SK-N-SH (cell line): ENCODE measurements at regions of chr2 and their contacts with region 1.

Region 1: GRCh38 chr2:31333527-31334183 is 80.9 kb downstream of the XDH start:
- DNase-seq: peak; percentile 82
- H3K4me3 ChIP-seq: no peak overlapping the region; a peak in 1 of 4 replicates
- H3K27ac ChIP-seq: peak overlapping the region in 1 of 2 experiments; percentile 43; a peak in 2 of 4 replicates
- H3K4me1 ChIP-seq: peaks cover 25 to 42% of the 10 kb centered on the region in 2 experiments; a peak in 3 of 4 replicates
- H3K27me3 ChIP-seq: no peaks in the 10 kb centered on the region
- CTCF ChIP-seq: peak; percentile 100
- EP300 ChIP-seq: peak in 1 of 2 experiments; percentile 50; a peak in 2 of 4 replicates
- RAD21 ChIP-seq: peak; percentile 100

Region 2: GRCh38 chr2:30721668-30722647 is 611.7 kb before region 1 on chr2:
- CTCF ChIA-PET with region 1: interaction called, 223 read pairs
- POLR2A ChIA-PET with region 1: no interaction called
- DNase-seq: no peak
- H3K4me3 ChIP-seq: no peak overlapping the region
- H3K27ac ChIP-seq: no peak overlapping the region
- H3K4me1 ChIP-seq: no peaks in the 10 kb centered on the region; a peak in 1 of 4 replicates
- H3K27me3 ChIP-seq: peaks cover 18% of the 10 kb centered on the region; the same call in 1 of the 2 replicates
- CTCF ChIP-seq: no peak
- EP300 ChIP-seq: no peak
- RAD21 ChIP-seq: no peak

Region 3: DNA sequence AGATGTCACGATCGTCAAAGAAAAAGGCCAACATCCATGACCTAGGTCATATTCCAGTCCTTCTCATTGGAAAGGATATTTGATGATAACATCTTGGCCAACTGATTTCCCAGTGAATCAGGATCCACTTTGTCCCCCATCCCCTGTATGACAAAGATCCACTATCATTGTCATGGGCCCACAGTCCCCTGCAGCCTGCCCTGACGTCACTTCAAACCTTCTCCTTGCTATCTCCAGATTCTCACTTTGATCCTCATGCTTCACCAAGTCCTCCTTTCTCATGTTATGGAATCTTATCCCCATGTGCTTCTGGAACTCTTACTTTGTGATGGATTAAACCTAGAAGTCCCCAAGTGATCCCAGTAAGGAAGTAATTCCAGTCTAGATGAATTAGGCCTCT is 221.1 kb before region 1 on chr2:
- CTCF ChIA-PET with region 1: no interaction called
- POLR2A ChIA-PET with region 1: no interaction called
- DNase-seq: no peak
- H3K4me3 ChIP-seq: no peak overlapping the region
- H3K27ac ChIP-seq: no peak overlapping the region
- H3K4me1 ChIP-seq: peaks cover 0 to 32% of the 10 kb centered on the region in 2 experiments; a peak in 2 of 4 replicates
- H3K27me3 ChIP-seq: no peaks in the 10 kb centered on the region
- CTCF ChIP-seq: no peak
- EP300 ChIP-seq: no peak
- RAD21 ChIP-seq: no peak

Region 4: GRCh38 chr2:31138037-31138962 is 195.4 kb before region 1 on chr2 and contains the start of gene GALNT14:
- CTCF ChIA-PET with region 1: interaction called, 93 read pairs
- POLR2A ChIA-PET with region 1: no interaction called
- DNase-seq: peak; percentile 98
- H3K4me3 ChIP-seq: peak within 1 kb of the TSS; percentile 55 to 64
- H3K27ac ChIP-seq: peak within 1 kb of the TSS in 1 of 2 experiments; percentile 68; a peak in 2 of 4 replicates
- H3K4me1 ChIP-seq: peaks cover 0 to 22% of the 10 kb centered on the region in 2 experiments; a peak in 1 of 4 replicates
- H3K27me3 ChIP-seq: peaks cover 57% of the 10 kb centered on the region
- CTCF ChIP-seq: peak; percentile 52
- EP300 ChIP-seq: peak in 1 of 2 experiments; percentile 16; a peak in 1 of 4 replicates
- RAD21 ChIP-seq: peak; percentile 67
- polyA plus RNA-seq, gene GALNT14: 1.6 and 1.8 TPM in 2 replicates

Region 5: GRCh38 chr2:31176742-31177141 is 156.9 kb before region 1 on chr2:
- CTCF ChIA-PET with region 1: interaction called, 214 read pairs
- POLR2A ChIA-PET with region 1: no interaction called
- DNase-seq: no peak
- H3K4me3 ChIP-seq: no peak overlapping the region
- H3K27ac ChIP-seq: no peak overlapping the region
- H3K4me1 ChIP-seq: peaks cover 0 to 5% of the 10 kb centered on the region in 2 experiments; a peak in 1 of 4 replicates
- H3K27me3 ChIP-seq: peaks cover 4% of the 10 kb centered on the region; the same call in 1 of the 2 replicates
- CTCF ChIP-seq: no peak
- EP300 ChIP-seq: no peak
- RAD21 ChIP-seq: no peak

Region 6: GRCh38 chr2:31233741-31234682 is 99.6 kb before region 1 on chr2 and contains the start of gene EHD3:
- CTCF ChIA-PET with region 1: interaction called, 185 read pairs
- POLR2A ChIA-PET with region 1: interaction called, 3 read pairs
- DNase-seq: peak; percentile 98
- H3K4me3 ChIP-seq: peak within 1 kb of the TSS; percentile 74 to 89
- H3K27ac ChIP-seq: peak within 1 kb of the TSS; percentile 19 to 92; a peak in 3 of 4 replicates
- H3K4me1 ChIP-seq: peaks cover 15 to 42% of the 10 kb centered on the region in 2 experiments; a peak in 3 of 4 replicates
- H3K27me3 ChIP-seq: no peaks in the 10 kb centered on the region
- CTCF ChIP-seq: peak; percentile 85
- EP300 ChIP-seq: peak in 1 of 2 experiments; percentile 24; a peak in 2 of 4 replicates
- RAD21 ChIP-seq: peak; percentile 80
- polyA plus RNA-seq, gene EHD3: 45.3 and 45.4 TPM in 2 replicates

Region 7: DNA sequence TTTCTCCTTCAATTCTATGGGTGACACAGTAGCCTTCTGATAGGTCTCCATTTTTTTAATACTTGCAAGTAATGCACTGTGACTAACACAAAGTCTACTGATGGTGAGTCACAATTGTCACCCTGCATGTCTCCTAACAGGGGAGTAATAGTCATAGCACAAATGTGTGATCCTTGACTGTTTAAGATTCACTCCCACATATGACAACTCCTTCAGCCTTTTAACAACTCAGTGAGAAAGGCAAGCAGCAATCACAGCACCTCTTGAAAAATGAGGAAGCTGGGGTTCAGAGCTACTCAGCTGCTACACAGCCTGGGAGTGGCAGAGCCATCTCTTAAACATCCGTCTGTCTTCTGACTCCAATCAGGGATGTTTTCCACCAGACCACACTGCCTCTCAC is 35.9 kb before region 1 on chr2:
- CTCF ChIA-PET with region 1: interaction called, 53 read pairs
- POLR2A ChIA-PET with region 1: interaction called, 3 read pairs
- DNase-seq: no peak
- H3K4me3 ChIP-seq: no peak overlapping the region
- H3K27ac ChIP-seq: peak overlapping the region in 1 of 2 experiments; percentile 49; a peak in 2 of 4 replicates
- H3K4me1 ChIP-seq: peaks cover 22 to 34% of the 10 kb centered on the region in 2 experiments
- H3K27me3 ChIP-seq: no peaks in the 10 kb centered on the region
- CTCF ChIP-seq: no peak
- EP300 ChIP-seq: no peak
- RAD21 ChIP-seq: no peak

Region 8: GRCh38 chr2:31318361-31319336 is 15.0 kb before region 1 on chr2:
- CTCF ChIA-PET with region 1: interaction called, 40 read pairs
- POLR2A ChIA-PET with region 1: no interaction called
- DNase-seq: no peak
- H3K4me3 ChIP-seq: no peak overlapping the region
- H3K27ac ChIP-seq: peak overlapping the region; percentile 4 to 67; a peak in 1 of 4 replicates
- H3K4me1 ChIP-seq: peaks cover 18 to 25% of the 10 kb centered on the region in 2 experiments
- H3K27me3 ChIP-seq: no peaks in the 10 kb centered on the region
- CTCF ChIP-seq: no peak
- EP300 ChIP-seq: peak in 1 of 2 experiments; percentile 32; a peak in 1 of 4 replicates
- RAD21 ChIP-seq: no peak

Region 9: DNA sequence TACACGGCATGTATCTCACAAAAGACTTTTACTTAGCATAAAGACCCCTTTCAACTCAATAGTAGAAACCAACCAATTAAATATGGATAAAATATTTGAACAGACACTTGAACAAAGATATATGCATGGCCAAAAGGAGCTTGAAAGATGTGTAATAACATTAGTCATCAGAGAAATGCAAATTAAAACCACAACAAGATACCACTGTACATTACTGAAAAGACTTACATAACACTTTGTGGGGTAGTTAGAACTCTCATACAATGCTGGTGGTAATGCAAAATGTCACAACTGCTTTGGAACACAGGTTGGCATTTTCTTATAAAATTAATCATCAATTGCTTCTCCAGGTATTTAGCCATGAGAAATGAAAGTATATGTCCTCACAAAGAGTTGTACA is 1354.9 kb after region 1 on chr2:
- CTCF ChIA-PET with region 1: no interaction called
- POLR2A ChIA-PET with region 1: no interaction called
- DNase-seq: no peak
- H3K4me3 ChIP-seq: no peak overlapping the region
- H3K27ac ChIP-seq: no peak overlapping the region
- H3K4me1 ChIP-seq: peaks cover 0 to 9% of the 10 kb centered on the region in 2 experiments; a peak in 1 of 4 replicates
- H3K27me3 ChIP-seq: no peaks in the 10 kb centered on the region
- CTCF ChIP-seq: no peak
- EP300 ChIP-seq: no peak
- RAD21 ChIP-seq: no peak